Right ventricle myocardium inferior (tissue), 1 donor: ENCODE measurements at regions of chr5 and their contacts with region 1.

Region 1: DNA sequence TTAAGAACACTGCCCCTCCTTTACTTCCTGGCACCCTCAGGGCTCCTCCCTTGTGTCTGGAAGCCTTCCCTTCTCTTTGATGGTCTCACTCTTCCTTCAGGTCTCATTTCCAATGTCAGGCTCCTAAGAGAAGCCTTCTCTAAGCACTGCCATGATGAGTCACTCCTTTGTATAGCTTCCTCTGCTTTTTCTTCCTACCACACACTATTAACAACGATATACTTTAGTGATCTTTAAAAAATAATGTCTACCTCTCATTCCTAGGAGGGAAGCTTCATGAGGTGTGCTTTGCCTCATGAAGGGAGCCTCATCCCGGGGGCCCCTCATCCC is 80.2 kb downstream of the BOD1 start:
- DNase-seq: no peak
- ATAC-seq: no peak

Region 2: DNA sequence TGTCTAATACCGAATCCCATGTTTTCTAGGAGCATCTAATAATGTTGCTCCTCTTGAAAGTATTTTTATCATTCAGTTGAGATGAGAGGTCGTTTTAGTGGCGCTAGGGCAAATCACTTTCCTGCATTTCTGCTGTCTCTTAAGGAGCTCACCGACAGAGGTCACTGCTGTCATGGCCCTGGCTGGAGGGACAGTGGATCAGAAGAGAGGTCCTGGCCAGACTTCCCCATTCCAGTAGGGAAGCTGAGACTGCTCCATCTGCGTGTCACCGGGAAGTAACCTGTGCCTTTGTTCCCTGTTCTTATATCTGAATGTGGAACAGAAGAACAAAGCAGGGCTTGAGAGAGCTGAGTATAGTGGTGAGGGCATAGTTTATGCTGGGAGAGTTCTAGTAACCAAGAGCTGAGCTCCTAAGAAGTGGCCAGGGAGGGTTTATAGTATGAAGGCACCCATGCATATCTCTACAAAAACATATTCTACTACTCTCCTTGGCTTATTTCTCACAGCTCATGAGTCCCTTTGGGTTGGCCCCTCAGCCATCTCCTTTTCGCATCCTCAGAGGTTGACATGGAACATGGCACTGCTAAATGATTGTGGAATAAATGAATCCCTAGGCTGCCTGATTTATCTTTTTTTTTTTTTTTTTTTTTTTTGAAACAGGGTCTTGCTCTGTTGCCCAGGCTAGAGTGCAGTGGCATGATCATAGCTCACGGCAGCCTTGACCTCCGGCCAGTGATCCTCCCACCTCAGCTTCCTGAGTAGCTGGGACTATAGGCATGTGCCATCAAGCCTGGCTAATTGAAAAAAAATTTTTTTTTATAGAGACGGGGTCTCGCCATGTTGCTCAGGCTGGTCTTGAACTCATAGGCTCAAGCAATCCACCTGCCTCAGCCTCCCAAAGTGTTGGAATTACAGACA is 525.5 kb before region 1 on chr5:
- intact Hi-C with region 1: no loop called
- DNase-seq: no peak
- ATAC-seq: peak; percentile 93

Region 3: DNA sequence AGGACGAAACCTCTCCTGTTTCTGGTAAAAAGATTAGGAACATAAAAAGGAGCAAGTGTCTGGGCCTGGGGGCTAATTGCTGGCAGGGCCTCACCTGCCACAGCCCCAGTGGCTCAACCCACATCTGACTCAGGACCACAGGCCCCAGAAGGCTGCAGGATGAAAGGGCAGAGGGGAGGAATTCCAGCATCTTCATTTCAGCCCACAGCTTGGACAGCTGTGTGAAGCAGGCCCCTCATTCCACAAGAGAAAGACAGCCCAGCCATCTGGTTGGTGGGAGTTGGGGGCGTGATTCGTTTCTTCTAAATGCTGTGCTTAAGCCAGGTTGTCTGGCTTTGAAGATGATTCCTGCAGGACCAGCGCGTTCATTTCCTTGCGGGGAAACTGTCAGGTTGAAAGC is 330.4 kb before region 1 on chr5:
- intact Hi-C with region 1: no loop called
- DNase-seq: no peak
- ATAC-seq: no peak

Region 4: GRCh38 chr5:173451031-173451430 is 85.2 kb before region 1 on chr5:
- intact Hi-C with region 1: loop called (anchors 5 kb)
- DNase-seq: no peak
- ATAC-seq: no peak

Region 5: GRCh38 chr5:173507171-173507570 is 29.1 kb before region 1 on chr5:
- intact Hi-C with region 1: no loop called
- DNase-seq: no peak
- ATAC-seq: no peak

Region 6: DNA sequence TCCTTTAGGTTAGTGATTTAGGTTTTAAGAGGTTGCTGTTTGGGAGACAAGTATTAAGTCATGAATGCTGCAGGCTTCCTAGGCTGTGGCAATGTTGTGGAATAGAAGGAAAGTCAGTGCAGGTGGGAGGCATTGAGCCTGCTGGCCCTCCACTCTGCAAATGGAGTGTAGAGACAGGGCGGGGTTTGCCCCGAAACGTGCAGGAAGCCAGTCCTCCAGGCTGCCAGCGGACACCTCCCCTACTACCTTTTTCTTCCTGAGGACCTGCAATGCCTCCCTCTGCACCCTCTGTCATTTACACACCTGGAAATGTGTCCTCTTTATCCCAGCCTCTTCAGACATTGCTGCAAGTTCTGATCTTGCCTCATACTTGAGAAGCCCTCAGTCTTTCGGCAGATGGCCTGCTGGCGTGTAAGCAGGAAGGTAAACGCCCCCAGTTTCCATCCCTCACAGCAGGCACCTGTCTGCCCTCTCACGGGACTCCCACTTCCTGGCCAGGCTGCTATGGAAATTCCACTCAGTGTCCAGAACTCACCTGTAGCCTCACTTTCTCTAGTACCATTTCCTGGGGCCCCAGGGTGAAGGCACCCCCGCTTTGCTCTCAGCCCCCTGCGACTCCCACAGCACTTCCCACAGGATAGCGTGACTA is 161.8 kb after region 1 on chr5:
- intact Hi-C with region 1: no loop called
- DNase-seq: no peak
- ATAC-seq: no peak